ENCODE measurements at regions of chr1 and their contacts with region 1.

Region 1: GRCh38 chr1:89762779-89763648 is 57.8 kb upstream of the LRRC8D start:
- DNase-seq: peak; percentile 91 to 95
- ATAC-seq: peak; percentile 98
- H3K4me3 ChIP-seq: peak overlapping the region; percentile 11 to 56
- H3K27ac ChIP-seq: no peak overlapping the region
- H3K4me1 ChIP-seq: no peaks in the 10 kb centered on the region
- H3K27me3 ChIP-seq: no peaks in the 10 kb centered on the region

Region 2: DNA sequence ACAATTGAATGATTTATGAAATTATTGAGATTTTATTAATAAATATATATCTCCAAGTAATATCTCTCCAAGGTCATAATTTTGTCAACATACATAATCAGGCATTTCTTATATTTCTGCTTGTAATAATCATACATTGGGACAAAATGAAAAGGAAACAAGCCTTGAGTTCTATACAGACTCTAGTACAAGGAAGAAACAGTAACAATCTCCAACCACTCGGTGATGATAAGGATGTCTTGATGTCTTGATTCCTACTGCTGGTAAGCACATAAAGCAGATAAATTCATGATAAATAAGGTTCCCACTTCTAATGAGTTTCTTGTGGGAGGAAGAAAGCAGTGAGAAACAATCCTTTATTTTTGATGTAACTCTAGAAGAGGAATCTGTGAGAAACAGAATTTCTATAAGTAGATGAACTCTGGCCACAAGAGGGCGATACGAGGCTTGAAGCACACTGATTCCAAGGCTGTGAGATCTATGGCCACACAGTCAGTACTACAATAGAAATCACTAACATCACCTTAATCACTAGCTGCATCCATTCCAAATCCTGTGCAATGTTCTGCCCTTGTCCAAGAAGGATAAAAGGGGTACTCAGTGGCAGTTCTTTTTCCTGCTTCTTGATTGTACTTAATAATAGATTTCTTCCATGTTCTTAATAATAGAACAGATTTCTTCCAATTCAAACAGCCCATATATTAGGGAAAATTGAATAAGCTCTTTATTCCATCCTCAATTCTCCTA is 279.8 kb before region 1 on chr1:
- intact Hi-C with region 1: loop called (anchors 2 to 5 kb)
- DNase-seq: peak in 1 of 2 donors; percentile 77
- ATAC-seq: peak; percentile 79
- H3K4me3 ChIP-seq: no peak overlapping the region
- H3K27ac ChIP-seq: no peak overlapping the region
- H3K4me1 ChIP-seq: no peaks in the 10 kb centered on the region
- H3K27me3 ChIP-seq: no peaks in the 10 kb centered on the region

Region 3: DNA sequence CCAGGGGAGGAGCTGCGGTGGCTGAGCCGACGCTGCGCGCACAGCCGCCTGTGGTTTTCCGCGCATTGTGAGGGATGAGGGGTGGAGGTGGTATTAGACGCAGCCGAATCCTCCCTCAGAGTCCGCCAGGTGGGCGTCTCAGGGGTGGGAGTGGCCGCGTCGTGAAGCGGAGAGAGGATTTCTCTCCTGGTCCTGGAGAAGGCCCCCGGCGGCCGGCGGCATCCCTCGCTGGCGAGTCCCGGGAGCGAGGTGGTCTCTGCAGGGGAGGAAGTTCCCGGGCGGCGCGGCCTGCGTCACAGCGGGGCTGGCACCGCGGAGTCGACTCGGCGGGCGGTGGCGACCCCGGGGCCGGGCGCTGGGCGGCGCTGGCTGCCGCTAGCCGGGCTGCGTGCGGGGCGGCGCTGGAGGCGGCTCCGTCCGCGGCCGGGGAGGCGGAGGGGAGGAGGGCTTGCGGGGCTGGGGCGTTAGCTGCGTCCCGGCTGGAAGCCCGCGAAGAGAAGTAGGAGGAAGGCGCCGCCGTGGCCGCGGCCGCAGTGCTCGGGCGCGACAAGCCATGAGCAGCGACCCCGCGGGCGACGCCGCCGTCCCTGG is 130.3 kb before region 1 on chr1 and contains the start of gene LRRC8C:
- intact Hi-C with region 1: loop called (anchors 2 to 5 kb)
- DNase-seq: peak; percentile 93 to 96
- ATAC-seq: peak; percentile 95
- H3K4me3 ChIP-seq: peak within 1 kb of the TSS; percentile 77 to 95
- H3K27ac ChIP-seq: peak within 1 kb of the TSS; percentile 16 to 85
- H3K4me1 ChIP-seq: no peaks in the 10 kb centered on the region
- H3K27me3 ChIP-seq: no peaks in the 10 kb centered on the region
- total RNA-seq, gene LRRC8C: 9.0 to 14.4 TPM

Region 4: GRCh38 chr1:89719502-89720306 is 43.3 kb before region 1 on chr1:
- intact Hi-C with region 1: no loop called
- DNase-seq: no peak
- ATAC-seq: no peak
- H3K4me3 ChIP-seq: no peak overlapping the region
- H3K27ac ChIP-seq: no peak overlapping the region
- H3K4me1 ChIP-seq: no peaks in the 10 kb centered on the region
- H3K27me3 ChIP-seq: no peaks in the 10 kb centered on the region

Region 5: GRCh38 chr1:90274376-90274775 is 511.4 kb after region 1 on chr1:
- intact Hi-C with region 1: no loop called
- DNase-seq: no peak
- ATAC-seq: no peak
- H3K4me3 ChIP-seq: no peak overlapping the region
- H3K27ac ChIP-seq: no peak overlapping the region
- H3K4me1 ChIP-seq: peaks cover 0 to 5% of the 10 kb centered on the region in 2 donors
- H3K27me3 ChIP-seq: no peaks in the 10 kb centered on the region

Measured in aorta (tissue), 5 donors.